ENCODE measurements at regions of chr19 and their contacts with region 1.

Region 1: DNA sequence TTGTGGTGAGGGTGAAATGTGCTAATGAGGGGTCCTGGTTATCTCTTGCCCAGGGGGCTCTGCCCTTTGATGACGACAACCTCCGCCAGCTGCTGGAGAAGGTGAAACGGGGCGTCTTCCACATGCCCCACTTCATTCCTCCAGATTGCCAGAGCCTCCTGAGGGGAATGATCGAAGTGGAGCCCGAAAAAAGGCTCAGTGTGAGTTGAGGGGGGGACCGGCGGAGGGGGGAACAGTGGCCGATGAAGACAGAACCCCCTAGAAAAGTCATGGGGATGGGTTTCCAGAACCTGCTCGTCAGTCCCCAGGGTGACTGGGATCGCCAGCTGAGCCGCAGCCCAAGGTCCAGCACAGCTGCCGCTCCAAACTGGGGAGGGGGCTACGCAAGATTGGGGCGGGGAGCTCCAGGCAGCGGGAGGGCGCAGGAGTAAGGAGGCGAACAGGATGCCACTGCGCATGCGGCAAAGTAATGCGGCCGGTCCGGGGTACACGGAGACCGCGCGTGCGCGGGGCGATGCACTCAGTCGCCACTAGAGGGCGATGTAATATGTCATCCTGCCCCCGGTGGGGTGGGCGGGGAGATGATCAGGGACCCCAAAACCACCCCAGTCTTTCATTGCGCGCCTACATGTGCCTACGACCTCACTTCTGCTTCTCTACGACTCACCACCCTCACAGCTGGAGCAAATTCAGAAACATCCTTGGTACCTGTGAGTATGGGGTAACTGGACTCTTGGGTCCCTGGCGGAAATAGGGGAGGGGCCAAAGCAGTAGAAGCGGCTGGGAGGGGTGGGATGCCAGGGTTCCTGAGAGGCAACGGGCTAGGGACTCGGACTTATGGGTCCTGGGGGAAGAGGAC is 17.9 kb downstream of the BRSK1 start:
- DNase-seq: peak; percentile 91 to 94 (median 93)
- ATAC-seq: peak; percentile 96
- H3K4me3 ChIP-seq: no peak overlapping the region
- H3K4me1 ChIP-seq: peaks cover 4% of the 10 kb centered on the region
- CTCF ChIP-seq: peak; percentile 97

Region 2: GRCh38 chr19:55385740-55386529 is 84.2 kb after region 1 on chr19 and contains the start of gene RPL28:
- intact Hi-C with region 1: loop called (anchors 10 kb)
- DNase-seq: peak; percentile 99 to 100 (median 99)
- ATAC-seq: peak; percentile 85
- H3K4me3 ChIP-seq: peak within 1 kb of the TSS; percentile 62
- H3K4me1 ChIP-seq: peaks cover 42% of the 10 kb centered on the region
- CTCF ChIP-seq: no peak
- total RNA-seq, gene RPL28: 942 to 1,365 (median 1,241) TPM